ENCODE measurements at regions of chr9 and their contacts with region 1.

Region 1: GRCh38 chr9:113591001-113591898 is 127.7 kb downstream of the RGS3 start:
- DNase-seq: peak; percentile 91
- ATAC-seq: peak; percentile 55
- H3K4me3 Mint-ChIP-seq: no peak overlapping the region
- H3K27ac Mint-ChIP-seq: no peak overlapping the region
- H3K4me1 Mint-ChIP-seq: peaks cover 36% of the 10 kb centered on the region
- H3K27me3 Mint-ChIP-seq: no peaks in the 10 kb centered on the region
- CTCF ChIP-seq: peak; percentile 88

Region 2: DNA sequence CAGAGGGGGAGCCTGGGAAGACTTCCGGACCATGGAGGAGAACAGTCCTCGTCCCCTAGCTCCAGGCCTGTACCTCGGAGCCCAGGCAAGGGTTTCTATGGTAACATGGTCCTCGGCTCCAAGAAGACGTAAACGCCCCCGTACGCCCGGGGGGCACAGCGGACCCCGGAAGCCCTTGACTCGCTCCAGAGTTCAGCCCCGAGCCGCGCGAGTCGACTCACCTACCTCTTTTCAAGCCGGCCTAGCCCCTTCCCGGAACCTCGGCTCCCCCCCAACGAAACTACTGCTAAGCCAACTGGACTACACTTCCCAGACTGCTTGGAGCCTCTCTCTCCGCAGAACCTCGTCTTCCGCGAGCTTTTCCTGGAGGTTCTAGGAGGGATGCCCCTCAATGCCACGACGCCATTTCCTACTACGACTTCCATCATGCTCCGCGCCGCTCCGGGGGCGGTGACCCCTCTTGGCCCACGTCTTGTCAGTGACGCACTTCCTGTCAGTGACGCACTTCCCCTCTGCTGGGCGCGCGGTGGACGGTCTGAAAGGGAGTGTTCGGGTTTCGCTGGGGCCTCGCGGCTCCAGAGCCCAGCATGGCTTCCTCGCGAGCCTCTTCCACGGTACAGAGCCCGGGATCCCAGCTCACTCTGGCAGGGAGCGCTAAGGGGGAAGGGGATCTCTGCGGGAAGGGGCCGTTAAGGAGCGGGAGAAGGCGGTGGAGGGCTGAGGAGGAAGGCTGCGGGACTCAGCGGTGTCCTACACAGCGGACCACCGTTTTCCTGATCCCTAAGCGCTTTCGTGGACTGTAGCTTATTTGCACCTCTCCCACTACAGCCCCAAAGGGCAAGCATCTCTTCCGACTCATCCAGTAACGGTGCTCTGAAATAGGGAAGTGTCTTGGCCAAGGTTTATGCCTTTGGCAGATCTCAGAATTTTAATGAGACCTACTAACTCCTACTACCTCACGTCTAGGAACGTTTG is 315.8 kb before region 1 on chr9 and contains the starts of genes CDC26 and PRPF4:
- CTCF ChIA-PET with region 1: interaction called, 10 read pairs
- POLR2A ChIA-PET with region 1: no interaction called
- DNase-seq: peak; percentile 97
- ATAC-seq: peak; percentile 95
- H3K4me3 Mint-ChIP-seq: no peak within 1 kb of the TSS
- H3K27ac Mint-ChIP-seq: no peak within 1 kb of the TSS
- H3K4me1 Mint-ChIP-seq: peaks cover 7% of the 10 kb centered on the region
- H3K27me3 Mint-ChIP-seq: no peaks in the 10 kb centered on the region
- CTCF ChIP-seq: no peak
- total RNA-seq, gene CDC26: 36.9 to 39.8 TPM (median 37.0 TPM) in 3 replicates
- total RNA-seq, gene PRPF4: 29.0 to 32.4 TPM (median 30.4 TPM) in 3 replicates

Region 3: GRCh38 chr9:113446323-113446740 is 144.9 kb before region 1 on chr9:
- CTCF ChIA-PET with region 1: interaction called, 34 read pairs
- POLR2A ChIA-PET with region 1: no interaction called
- DNase-seq: no peak
- ATAC-seq: peak; percentile 48
- H3K4me3 Mint-ChIP-seq: no peak overlapping the region
- H3K27ac Mint-ChIP-seq: 0 out of 2 replicates have a peak overlapping the region, but pooled peaks have one; percentile 87
- H3K4me1 Mint-ChIP-seq: peaks cover 8% of the 10 kb centered on the region; the same call in 1 of the 2 replicates
- H3K27me3 Mint-ChIP-seq: no peaks in the 10 kb centered on the region
- CTCF ChIP-seq: 0 out of 2 replicates have a peak, but pooled peaks have one; percentile 33

Region 4: GRCh38 chr9:113463418-113464285 is 127.6 kb before region 1 on chr9 and contains the start of gene RGS3:
- CTCF ChIA-PET with region 1: interaction called, 13 read pairs
- POLR2A ChIA-PET with region 1: interaction called, 4 read pairs
- DNase-seq: peak; percentile 86
- ATAC-seq: peak; percentile 100
- H3K4me3 Mint-ChIP-seq: peak within 1 kb of the TSS; percentile 68
- H3K27ac Mint-ChIP-seq: no peak within 1 kb of the TSS
- H3K4me1 Mint-ChIP-seq: peaks cover 20% of the 10 kb centered on the region
- H3K27me3 Mint-ChIP-seq: peaks cover 40% of the 10 kb centered on the region
- CTCF ChIP-seq: no peak
- total RNA-seq, gene RGS3: 15.0 to 17.2 TPM (median 16.6 TPM) in 3 replicates

Region 5: DNA sequence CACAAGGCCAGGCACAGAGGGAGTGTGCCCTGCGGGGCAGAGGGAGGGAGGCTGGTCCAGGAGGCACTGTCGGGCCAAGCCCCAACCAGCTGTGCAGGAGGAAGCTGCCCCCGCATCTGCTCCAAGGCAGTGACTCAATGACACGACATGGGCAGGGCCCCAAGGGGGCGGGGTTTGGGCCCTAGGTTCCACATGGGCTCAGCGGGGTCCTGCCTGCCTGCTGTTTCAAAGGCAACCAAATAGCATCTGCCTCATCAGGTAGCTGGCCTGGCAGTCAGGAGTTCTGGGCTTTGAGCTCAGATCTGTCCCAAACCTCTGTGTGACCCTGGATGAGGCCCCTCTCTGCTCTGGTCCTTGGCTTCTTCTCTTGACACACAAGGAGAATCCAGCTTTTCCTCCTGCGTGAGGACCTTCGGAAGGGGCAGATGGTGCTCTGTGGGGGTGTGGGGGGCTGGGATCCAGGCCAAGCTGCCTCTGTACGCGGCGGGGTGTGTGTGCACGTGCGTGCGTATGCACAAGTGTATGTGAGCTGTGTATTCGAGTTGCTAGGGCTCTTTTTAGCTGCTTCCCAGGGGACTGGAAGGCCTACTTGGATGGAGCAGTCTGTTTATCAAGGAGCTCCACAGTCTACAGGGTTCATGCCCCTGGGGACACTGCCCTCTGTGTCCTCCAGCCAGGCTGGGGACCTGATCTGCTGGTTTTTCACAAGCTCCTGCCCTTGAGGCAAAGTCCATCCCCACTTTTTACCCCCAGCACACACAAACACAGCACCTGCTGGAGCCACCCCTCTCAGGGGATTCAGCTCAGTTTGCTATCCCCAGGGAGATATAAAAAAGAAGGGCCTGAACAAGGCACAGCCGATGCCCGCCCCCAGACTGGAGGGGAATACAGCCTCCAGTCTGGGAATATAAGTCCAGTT is 11.1 kb after region 1 on chr9:
- CTCF ChIA-PET with region 1: interaction called, 41 read pairs
- POLR2A ChIA-PET with region 1: interaction called, 7 read pairs
- DNase-seq: peak; percentile 76
- ATAC-seq: peak; percentile 81
- H3K4me3 Mint-ChIP-seq: no peak overlapping the region
- H3K27ac Mint-ChIP-seq: peak overlapping the region; percentile 72; the same call in 1 of the 2 replicates
- H3K4me1 Mint-ChIP-seq: peaks cover 37% of the 10 kb centered on the region
- H3K27me3 Mint-ChIP-seq: peaks cover 2% of the 10 kb centered on the region
- CTCF ChIP-seq: no peak

Region 6: GRCh38 chr9:113622600-113623400 is 31.6 kb after region 1 on chr9:
- CTCF ChIA-PET with region 1: interaction called, 24 read pairs
- POLR2A ChIA-PET with region 1: interaction called, 7 read pairs
- DNase-seq: peak; percentile 70
- ATAC-seq: peak; percentile 89
- H3K4me3 Mint-ChIP-seq: peak overlapping the region; percentile 20
- H3K27ac Mint-ChIP-seq: peak overlapping the region; percentile 93
- H3K4me1 Mint-ChIP-seq: peaks cover 54% of the 10 kb centered on the region
- H3K27me3 Mint-ChIP-seq: peaks cover 26% of the 10 kb centered on the region
- CTCF ChIP-seq: no peak

Region 7: DNA sequence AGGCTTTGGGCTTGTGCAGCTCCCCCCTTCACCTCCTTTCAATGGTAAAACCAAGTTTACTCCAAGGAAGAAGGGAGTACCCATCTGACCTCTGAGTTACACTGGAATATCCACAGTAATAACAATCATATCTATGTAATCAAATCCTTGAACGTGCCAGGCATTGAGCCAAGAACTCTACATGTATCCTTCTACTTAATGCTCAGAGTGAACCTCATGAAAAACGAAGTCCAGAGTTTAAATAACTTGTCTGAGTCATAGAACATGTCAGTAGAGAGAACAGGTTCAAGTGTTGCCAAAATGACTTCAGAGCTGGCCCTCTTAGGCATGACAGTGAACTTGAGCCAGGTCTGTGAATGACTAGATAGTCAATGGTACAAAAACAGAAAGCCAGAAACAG is 120.8 kb after region 1 on chr9:
- CTCF ChIA-PET with region 1: no interaction called
- POLR2A ChIA-PET with region 1: no interaction called
- DNase-seq: no peak
- ATAC-seq: no peak
- H3K4me3 Mint-ChIP-seq: no peak overlapping the region
- H3K27ac Mint-ChIP-seq: no peak overlapping the region
- H3K4me1 Mint-ChIP-seq: peaks cover 14% of the 10 kb centered on the region
- H3K27me3 Mint-ChIP-seq: peaks cover 6% of the 10 kb centered on the region
- CTCF ChIP-seq: no peak

Measured in WTC11 (cell line).